Transverse colon (tissue), 4 donors: ENCODE measurements at regions of chr18 and their contacts with region 1.

Region 1: DNA sequence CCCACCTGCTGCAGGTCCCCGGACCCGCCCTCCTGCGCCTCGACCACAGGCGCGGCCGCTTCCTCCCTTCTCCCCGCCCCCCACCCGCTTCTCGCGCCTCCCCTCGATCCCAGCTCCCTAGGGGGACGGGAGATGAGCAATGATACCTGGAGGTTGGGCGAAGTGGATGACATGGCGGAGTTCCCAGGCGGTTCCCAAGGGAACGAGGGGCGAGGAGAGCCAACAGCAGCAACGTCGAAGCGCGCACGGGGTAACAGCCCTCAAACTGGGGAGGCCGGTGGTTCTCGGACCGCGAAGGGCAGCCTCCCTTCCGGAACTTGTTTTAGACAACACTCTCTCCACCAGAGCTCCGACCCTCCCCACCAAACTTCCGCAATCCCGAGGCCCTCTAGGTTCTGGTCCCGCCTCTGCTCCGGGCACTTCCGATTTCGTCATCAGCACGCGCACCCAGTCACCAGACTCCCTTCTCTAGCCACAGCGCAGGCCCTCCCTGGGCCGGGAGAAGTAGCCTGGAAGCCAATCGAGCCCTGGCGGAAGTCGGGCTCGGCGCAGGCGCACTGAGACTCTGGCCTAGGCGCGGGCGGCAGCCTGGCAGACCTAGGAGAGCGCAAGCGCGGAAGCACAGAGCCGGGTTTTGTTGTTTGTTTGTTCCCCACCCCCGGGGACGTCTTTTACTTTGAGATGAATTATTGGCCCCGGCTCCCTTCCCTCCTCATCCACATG is at the start of gene VPS4B:
- DNase-seq: peak; percentile 99
- H3K4me3 ChIP-seq: peak within 1 kb of the TSS; percentile 65 to 89 (median 78)
- H3K27ac ChIP-seq: peak within 1 kb of the TSS; percentile 89 to 96 (median 94)
- H3K4me1 ChIP-seq: peaks cover 0 to 33% (median 12%) of the 10 kb centered on the region in 4 donors
- H3K27me3 ChIP-seq: no peaks in the 10 kb centered on the region
- CTCF ChIP-seq: peak in 1 of 5 experiments; percentile 47
- EP300 ChIP-seq: no peak
- POLR2A ChIP-seq: peak; percentile 93
- total RNA-seq, gene VPS4B: 40.4 to 122 (median 63.3) TPM

Region 2: DNA sequence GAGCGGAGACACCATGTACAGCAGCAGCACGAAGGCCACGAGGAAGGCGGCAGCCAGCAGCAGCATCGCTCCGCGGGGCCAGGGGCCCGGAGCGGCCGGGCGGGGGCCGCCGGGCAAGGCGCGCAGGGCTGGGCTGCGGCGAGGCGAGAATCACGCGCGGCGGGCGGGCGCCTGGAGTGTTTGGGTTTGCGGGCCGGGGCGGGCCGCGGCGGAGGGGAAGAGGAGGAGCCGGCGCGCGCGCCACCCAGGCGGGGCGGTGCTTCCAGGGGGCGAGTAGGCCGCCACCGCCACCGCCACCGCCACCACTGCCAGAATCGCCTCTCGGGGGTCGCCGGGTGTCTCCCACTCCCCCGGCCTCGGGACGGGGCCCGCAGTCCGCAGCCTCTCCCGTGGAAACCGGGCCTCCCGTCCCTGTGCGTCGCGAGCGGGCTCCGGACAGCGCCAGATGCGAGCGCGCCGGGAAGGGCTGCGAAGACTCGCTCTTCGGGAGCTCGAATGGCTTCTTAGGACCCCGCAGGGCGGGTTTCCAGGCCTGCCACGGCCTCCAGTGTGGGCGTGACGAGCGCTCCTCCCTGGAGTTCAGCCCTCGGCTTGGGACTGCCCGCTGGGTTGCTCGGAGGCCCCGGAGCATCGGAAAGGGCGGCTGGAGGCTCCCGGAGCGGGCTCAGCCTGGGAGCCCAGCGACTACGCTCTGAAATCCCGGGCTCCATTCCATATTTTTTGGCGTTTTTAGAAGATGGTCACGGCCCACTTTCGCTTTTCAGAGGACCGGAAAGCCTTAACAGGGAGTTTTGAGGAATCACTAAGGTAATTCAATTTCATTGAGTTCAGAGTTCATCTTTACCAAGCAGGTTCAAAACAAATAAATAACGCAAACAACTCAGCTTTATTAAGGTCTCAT is 54.9 kb before region 1 on chr18 and contains the start of gene KDSR:
- in situ Hi-C with region 1: no loop called
- intact Hi-C with region 1: loop called (anchors 10 kb)
- DNase-seq: peak; percentile 94
- H3K4me3 ChIP-seq: peak within 1 kb of the TSS; percentile 91 to 98 (median 95)
- H3K27ac ChIP-seq: peak within 1 kb of the TSS; percentile 95 to 99 (median 98)
- H3K4me1 ChIP-seq: peaks cover 0 to 33% (median 16%) of the 10 kb centered on the region in 4 donors
- H3K27me3 ChIP-seq: no peaks in the 10 kb centered on the region
- CTCF ChIP-seq: no peak
- EP300 ChIP-seq: no peak
- POLR2A ChIP-seq: peak; percentile 95
- total RNA-seq, gene KDSR: 13.1 to 37.2 (median 28.3) TPM

Region 3: DNA sequence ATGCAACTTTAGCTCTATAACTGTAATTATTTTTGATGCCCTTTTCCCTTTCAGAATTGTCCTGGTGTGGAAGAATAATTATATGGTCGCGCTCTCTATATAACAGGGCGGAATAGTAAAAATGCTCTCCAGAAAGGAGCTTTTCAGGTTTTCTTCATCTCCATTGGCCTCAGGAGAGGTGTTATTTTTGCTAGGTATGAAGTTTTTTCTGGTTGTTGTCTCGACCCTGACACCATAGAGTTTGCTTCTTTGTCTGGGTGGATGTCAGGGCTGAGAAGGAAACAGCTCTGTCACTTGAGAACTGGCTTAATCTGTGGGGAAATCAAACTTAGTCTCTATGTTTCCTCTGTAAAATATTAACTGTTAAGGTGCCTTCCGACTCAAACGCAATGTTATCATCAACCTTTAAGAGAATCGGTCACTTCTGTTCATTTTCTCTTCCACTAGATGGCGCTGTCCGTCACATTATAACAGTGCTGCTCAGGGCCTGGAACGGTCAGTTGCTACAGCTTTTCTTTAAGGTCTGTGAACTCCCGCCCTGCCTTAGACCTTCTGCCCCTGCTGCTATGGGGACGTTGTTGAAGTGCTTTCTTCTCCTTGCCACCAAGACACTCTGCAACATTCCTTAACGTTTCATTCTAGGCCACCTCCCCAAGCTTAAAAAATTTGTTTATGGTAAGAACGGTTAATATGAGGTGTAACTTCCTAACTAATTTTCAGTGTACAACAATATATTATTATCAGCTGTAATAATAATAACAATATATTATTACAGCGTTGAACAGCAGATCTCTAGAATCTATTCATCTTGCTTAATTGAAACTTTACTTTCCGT is 96.1 kb after region 1 on chr18:
- in situ Hi-C with region 1: no loop called
- intact Hi-C with region 1: no loop called
- DNase-seq: peak; percentile 50
- H3K4me3 ChIP-seq: no peak overlapping the region
- H3K27ac ChIP-seq: no peak overlapping the region
- H3K4me1 ChIP-seq: peaks cover 0 to 4% (median 2%) of the 10 kb centered on the region in 4 donors
- H3K27me3 ChIP-seq: no peaks in the 10 kb centered on the region
- CTCF ChIP-seq: peak; percentile 73 to 79 (median 77)
- EP300 ChIP-seq: no peak
- POLR2A ChIP-seq: no peak